OCI-LY7 (cell line): ENCODE measurements at regions of chr2 and their contacts with region 1.

Region 1: DNA sequence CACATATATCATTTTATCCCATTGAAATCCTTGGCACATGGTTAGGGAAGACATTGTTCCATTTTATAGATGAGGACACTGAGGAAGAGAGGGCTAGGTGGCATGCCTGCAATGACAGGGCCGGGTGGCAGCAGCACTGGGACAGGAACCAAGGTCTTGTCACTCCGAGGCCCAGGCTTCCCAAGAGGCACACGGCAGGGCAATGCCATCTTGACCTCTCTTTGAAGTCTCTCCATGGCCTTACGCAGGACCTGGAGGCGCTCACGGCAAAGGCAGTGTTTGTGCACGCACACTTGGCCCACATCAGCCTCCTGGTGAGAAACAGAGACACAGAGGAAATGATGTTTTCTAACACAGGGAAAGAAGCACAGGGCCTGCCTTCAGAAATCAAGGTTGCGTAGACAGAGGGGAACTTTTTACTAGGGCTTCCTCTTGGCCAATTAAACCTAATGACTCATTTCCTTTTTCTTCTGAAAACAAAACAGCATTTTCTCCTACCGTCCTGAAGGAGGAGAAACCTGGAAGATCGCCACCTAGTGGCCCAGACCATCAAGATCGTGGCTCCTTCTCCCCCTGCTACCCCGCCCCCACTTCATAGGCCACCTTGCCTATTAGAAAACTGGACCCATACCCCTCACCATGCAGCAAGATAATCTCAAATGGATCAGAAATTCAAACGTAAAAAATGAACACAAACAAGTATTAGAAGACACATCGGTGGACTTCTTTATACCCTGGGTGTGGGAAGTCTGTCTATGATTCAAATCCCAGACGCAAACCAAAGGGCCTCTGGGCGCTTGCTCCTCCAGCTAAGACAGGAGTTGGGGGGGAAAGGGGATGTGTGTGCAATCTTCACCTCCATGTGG is 74.6 kb upstream of the SP3 start:
- DNase-seq: peak; percentile 92
- H3K4me3 ChIP-seq: peak overlapping the region; percentile 38
- H3K27ac ChIP-seq: peak overlapping the region; percentile 63
- H3K4me1 ChIP-seq: peaks cover 6% of the 10 kb centered on the region
- CTCF ChIP-seq: peak; percentile 94

Region 2: DNA sequence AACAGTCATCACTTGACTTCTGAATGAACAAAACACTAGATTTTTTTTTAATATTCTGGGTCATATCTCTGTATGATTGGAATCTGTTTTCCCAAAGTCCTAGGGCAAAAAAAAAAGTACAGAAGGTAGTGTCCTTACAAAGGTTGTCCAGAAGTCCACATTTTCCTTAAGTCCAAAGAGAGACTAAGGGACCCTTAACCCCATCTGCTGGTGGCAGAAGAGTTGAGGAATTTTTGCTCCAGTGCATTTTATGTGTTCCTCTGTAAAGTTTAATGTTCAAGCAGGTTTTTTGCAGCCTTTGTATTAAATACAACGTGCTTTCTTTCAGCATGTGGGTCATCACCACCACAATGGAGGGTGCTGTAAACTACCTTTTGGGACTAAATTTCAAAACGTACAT is 290.5 kb before region 1 on chr2:
- CTCF ChIA-PET with region 1: no interaction called
- POLR2A ChIA-PET with region 1: no interaction called
- intact Hi-C with region 1: loop called (anchors 1 kb)
- DNase-seq: no peak
- H3K4me3 ChIP-seq: no peak overlapping the region
- H3K27ac ChIP-seq: no peak overlapping the region
- H3K4me1 ChIP-seq: no peaks in the 10 kb centered on the region
- CTCF ChIP-seq: peak; percentile 25; the same call in 1 of the 2 replicates

Region 3: GRCh38 chr2:174667379-174667781 is 627.6 kb after region 1 on chr2:
- CTCF ChIA-PET with region 1: no interaction called
- POLR2A ChIA-PET with region 1: no interaction called
- intact Hi-C with region 1: no loop called
- DNase-seq: no peak
- H3K4me3 ChIP-seq: no peak overlapping the region
- H3K27ac ChIP-seq: no peak overlapping the region
- H3K4me1 ChIP-seq: no peaks in the 10 kb centered on the region
- CTCF ChIP-seq: no peak